A549 (cell line): ENCODE measurements at regions of chr5 and their contacts with region 1.

Region 1: DNA sequence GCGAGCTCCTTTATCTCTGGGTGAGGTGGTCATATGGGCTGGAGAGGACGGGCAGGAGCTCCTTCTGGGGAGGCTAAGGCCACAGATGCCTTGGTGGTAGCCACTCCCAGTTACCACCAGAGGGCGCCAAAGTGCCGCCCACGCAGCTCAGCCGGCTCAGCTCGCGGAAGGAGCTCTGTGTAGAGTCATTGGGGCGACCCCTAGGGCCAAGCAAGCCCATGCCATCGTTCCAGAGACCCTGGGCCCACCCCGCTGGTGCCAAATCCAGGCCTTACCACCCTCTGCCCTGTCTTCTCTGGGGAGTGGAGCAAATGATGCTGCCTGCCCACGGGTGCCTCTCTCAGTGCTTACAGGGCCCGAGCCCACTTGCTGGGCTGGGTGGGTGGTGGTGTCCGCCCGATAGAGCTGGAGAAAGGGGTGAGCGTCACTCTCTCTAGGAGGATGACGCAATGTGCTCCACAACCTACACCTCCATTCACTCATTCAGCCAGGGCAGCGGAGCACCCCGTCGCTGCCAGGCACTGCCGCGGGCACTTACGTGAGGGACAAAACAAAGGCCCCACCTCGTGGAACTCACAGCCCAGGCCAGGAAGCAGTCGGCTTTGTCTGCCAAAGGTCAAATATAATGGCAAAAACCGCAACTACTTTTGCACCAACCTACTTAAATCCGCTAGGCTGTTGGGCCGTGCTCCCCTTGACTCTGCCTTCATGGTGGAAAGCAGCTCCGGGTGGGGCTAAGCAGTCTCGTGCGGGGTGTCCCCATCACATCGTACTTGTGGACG is 13.8 kb downstream of the TSPAN17 start:
- DNase-seq: peak; percentile 75 to 95
- ATAC-seq: peak; percentile 64 to 90
- H3K4me3 ChIP-seq: no peak overlapping the region
- H3K27ac ChIP-seq: no peak overlapping the region
- H3K4me1 ChIP-seq: no peaks in the 10 kb centered on the region
- CTCF ChIP-seq: peak; percentile 93
- EP300 ChIP-seq: no peak
- POLR2A ChIP-seq: no peak
- RAD21 ChIP-seq: peak; percentile 96 to 97

Region 2: GRCh38 chr5:176481711-176482110 is 179.3 kb before region 1 on chr5:
- CTCF ChIA-PET with region 1: no interaction called
- POLR2A ChIA-PET with region 1: no interaction called
- DNase-seq: peak in 1 of 2 experiments; percentile 79
- ATAC-seq: peak; percentile 64 to 85; a peak in 4 of 6 replicates
- H3K4me3 ChIP-seq: no peak overlapping the region
- H3K27ac ChIP-seq: peak overlapping the region; percentile 28 to 57; a peak in 5 of 6 replicates
- H3K4me1 ChIP-seq: peaks cover 12% of the 10 kb centered on the region
- CTCF ChIP-seq: no peak
- EP300 ChIP-seq: no peak
- POLR2A ChIP-seq: no peak
- RAD21 ChIP-seq: no peak

Region 3: GRCh38 chr5:176629853-176630712 is 31.0 kb before region 1 on chr5 and contains the starts of genes EIF4E1B and SNCB:
- CTCF ChIA-PET with region 1: interaction called, 12 read pairs
- POLR2A ChIA-PET with region 1: no interaction called
- DNase-seq: peak; percentile 37 to 64
- ATAC-seq: peak; percentile 75 to 92
- H3K4me3 ChIP-seq: peak within 1 kb of the TSS; percentile 53
- H3K27ac ChIP-seq: peak within 1 kb of the TSS in 1 of 2 experiments; percentile 65; a peak in 2 of 6 replicates
- H3K4me1 ChIP-seq: peaks cover 8% of the 10 kb centered on the region; the same call in 1 of the 3 replicates
- CTCF ChIP-seq: no peak
- EP300 ChIP-seq: no peak
- POLR2A ChIP-seq: no peak
- RAD21 ChIP-seq: no peak
- polyA plus RNA-seq, gene EIF4E1B: not detected in 2 replicates
- polyA plus RNA-seq, gene SNCB: 0.26 and 0.37 TPM in 2 replicates

Region 4: DNA sequence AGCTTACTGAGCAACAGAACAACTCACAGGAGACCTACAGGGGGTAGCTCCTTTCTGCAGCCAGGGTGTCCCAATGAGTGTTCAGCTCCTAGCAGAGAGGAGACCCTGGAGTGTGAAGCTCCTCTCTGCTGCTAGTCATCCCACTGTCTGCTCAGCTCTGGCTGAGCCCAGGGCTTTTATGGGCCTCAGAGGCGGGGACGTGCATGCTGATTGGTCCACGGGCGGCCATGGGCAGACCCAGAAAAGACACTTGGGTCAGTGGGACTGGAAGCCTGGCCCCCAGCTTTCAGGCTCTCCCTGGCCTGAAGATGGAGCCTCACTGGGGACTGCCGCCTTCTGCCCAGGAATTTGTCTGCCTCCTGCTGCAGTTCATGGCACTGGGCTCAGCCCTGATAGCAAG is 26.8 kb after region 1 on chr5:
- CTCF ChIA-PET with region 1: interaction called, 53 read pairs
- POLR2A ChIA-PET with region 1: no interaction called
- DNase-seq: no peak
- ATAC-seq: peak in 1 of 2 experiments; percentile 59; a peak in 3 of 6 replicates
- H3K4me3 ChIP-seq: no peak overlapping the region
- H3K27ac ChIP-seq: no peak overlapping the region
- H3K4me1 ChIP-seq: no peaks in the 10 kb centered on the region
- CTCF ChIP-seq: no peak
- EP300 ChIP-seq: no peak
- POLR2A ChIP-seq: no peak
- RAD21 ChIP-seq: no peak

Region 5: DNA sequence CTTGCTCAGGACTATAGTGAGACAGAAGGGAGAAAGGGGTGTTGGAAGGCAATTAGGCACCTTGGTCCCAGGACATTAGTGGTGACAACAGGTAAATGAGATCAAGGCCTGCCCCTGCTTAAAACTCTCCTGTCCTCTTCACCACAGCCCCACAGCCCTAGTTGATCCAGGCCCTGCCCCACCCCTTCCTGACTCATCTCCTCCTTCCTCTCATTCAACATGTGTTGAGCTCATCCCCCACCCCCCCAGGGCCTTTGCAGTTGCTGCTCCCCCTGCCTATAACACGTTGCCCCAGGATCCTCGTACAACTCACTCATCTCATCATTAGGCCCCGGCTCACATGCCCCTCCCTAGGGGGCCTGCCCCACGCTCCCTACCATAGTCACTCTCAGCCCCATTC is 53.0 kb after region 1 on chr5:
- CTCF ChIA-PET with region 1: interaction called, 10 read pairs
- POLR2A ChIA-PET with region 1: no interaction called
- DNase-seq: no peak
- ATAC-seq: no peak
- H3K4me3 ChIP-seq: no peak overlapping the region
- H3K27ac ChIP-seq: no peak overlapping the region
- H3K4me1 ChIP-seq: no peaks in the 10 kb centered on the region
- CTCF ChIP-seq: no peak
- EP300 ChIP-seq: no peak
- POLR2A ChIP-seq: no peak
- RAD21 ChIP-seq: no peak

Region 6: GRCh38 chr5:176817841-176818377 is 156.9 kb after region 1 on chr5:
- CTCF ChIA-PET with region 1: interaction called, 90 read pairs
- POLR2A ChIA-PET with region 1: no interaction called
- DNase-seq: peak; percentile 62 to 89
- ATAC-seq: peak; percentile 71 to 87
- H3K4me3 ChIP-seq: peak overlapping the region; percentile 65
- H3K27ac ChIP-seq: peak overlapping the region; percentile 55 to 84; a peak in 5 of 6 replicates
- H3K4me1 ChIP-seq: peaks cover 10% of the 10 kb centered on the region
- CTCF ChIP-seq: peak; percentile 70
- EP300 ChIP-seq: no peak
- POLR2A ChIP-seq: no peak
- RAD21 ChIP-seq: peak; percentile 40 to 62; a peak in 4 of 5 replicates

Region 7: DNA sequence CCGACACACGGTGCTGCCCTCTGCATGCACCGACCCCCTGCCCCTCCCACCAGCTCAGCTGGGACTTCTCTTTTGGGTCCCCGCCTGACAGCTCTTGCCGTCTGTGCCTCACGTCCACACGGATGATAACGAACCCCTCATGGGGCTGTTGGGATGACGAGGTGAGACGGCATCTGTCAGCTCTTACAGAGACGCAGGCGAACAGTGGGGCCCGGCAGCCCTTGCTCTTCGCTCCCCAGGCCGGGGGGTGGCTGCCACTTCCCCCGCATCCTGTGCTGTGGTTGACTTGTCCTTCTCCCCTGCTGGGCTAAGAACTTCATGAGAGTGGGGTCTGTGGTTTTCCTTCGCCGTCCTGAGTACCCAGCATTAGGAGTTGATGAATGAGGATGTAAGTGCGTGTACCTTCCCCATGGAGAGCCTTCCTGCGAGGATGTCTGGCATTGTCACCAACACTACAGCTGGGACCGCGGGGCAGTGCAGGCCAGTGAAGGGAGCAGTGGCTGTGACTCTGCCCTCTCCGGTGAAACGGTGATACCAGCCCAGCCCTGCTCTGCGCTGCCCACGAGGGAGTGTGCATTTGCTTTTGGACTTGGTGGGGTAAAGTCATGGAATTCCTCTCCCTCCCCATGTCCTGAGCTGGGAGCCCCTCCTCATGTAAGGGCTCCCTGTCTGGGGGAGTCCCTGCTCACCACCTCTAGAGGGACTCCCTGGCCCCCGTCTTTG is 214.9 kb after region 1 on chr5:
- CTCF ChIA-PET with region 1: interaction called, 19 read pairs
- POLR2A ChIA-PET with region 1: no interaction called
- DNase-seq: no peak
- ATAC-seq: peak in 1 of 2 experiments; percentile 24; a peak in 4 of 6 replicates
- H3K4me3 ChIP-seq: no peak overlapping the region
- H3K27ac ChIP-seq: no peak overlapping the region
- H3K4me1 ChIP-seq: no peaks in the 10 kb centered on the region
- CTCF ChIP-seq: no peak
- EP300 ChIP-seq: no peak
- POLR2A ChIP-seq: no peak
- RAD21 ChIP-seq: no peak

Region 8: GRCh38 chr5:177113566-177114424 is 452.7 kb after region 1 on chr5:
- CTCF ChIA-PET with region 1: interaction called, 123 read pairs
- POLR2A ChIA-PET with region 1: no interaction called
- DNase-seq: peak; percentile 74 to 94
- ATAC-seq: peak; percentile 75
- H3K4me3 ChIP-seq: no peak overlapping the region
- H3K27ac ChIP-seq: no peak overlapping the region
- H3K4me1 ChIP-seq: peaks cover 4% of the 10 kb centered on the region; the same call in 1 of the 3 replicates
- CTCF ChIP-seq: peak; percentile 97
- EP300 ChIP-seq: no peak
- POLR2A ChIP-seq: no peak
- RAD21 ChIP-seq: peak; percentile 95 to 99